ENCODE measurements at regions of chr6 and their contacts with region 1.

Region 1: DNA sequence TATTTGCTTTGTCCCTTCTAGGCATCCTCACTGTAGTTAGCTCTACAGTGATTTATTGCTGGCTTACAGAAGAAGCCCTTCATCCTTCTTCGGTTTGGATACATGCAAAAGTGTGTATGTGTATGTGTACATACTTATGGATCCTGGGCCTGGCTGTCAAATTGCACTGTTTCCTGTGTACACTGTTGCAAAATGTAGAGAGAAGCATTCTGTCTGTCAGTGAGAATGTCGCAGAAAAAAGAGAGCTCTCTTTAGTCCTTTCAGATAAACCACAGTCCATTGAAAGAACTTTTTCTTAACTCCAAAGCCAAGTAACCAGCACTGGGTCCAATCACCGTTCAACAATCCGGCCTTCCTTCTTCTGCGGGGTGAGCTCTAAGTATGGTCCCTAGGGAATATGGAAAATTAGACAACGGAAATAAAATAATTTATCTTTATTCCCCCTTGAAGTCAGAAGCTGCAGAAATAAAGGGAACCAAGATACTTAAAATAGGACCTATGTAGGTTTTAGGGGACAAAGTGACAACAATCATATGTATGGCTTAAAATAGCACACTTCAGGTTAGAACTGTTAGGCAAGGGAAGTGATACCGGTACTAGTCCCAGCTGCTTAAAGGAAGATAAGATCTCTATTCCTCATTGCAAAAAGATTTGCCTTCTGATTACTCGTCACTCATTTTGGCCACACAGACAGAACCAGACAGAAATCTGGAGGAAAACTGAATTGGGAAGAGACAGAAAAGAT is 107.0 kb downstream of the CD83 start:
- DNase-seq: no peak
- H3K4me3 ChIP-seq: no peak overlapping the region
- H3K27ac ChIP-seq: no peak overlapping the region
- H3K4me1 ChIP-seq: no peaks in the 10 kb centered on the region
- H3K27me3 ChIP-seq: no peaks in the 10 kb centered on the region
- CTCF ChIP-seq: no peak

Region 2: GRCh38 chr6:13908955-13909381 is 315.6 kb before region 1 on chr6:
- CTCF ChIA-PET with region 1: no interaction called
- POLR2A ChIA-PET with region 1: no interaction called
- intact Hi-C with region 1: no loop called
- DNase-seq: peak; percentile 54 to 67
- H3K4me3 ChIP-seq: no peak overlapping the region
- H3K27ac ChIP-seq: no peak overlapping the region
- H3K4me1 ChIP-seq: peaks cover 18% of the 10 kb centered on the region
- H3K27me3 ChIP-seq: no peaks in the 10 kb centered on the region
- CTCF ChIP-seq: peak; percentile 92

Region 3: DNA sequence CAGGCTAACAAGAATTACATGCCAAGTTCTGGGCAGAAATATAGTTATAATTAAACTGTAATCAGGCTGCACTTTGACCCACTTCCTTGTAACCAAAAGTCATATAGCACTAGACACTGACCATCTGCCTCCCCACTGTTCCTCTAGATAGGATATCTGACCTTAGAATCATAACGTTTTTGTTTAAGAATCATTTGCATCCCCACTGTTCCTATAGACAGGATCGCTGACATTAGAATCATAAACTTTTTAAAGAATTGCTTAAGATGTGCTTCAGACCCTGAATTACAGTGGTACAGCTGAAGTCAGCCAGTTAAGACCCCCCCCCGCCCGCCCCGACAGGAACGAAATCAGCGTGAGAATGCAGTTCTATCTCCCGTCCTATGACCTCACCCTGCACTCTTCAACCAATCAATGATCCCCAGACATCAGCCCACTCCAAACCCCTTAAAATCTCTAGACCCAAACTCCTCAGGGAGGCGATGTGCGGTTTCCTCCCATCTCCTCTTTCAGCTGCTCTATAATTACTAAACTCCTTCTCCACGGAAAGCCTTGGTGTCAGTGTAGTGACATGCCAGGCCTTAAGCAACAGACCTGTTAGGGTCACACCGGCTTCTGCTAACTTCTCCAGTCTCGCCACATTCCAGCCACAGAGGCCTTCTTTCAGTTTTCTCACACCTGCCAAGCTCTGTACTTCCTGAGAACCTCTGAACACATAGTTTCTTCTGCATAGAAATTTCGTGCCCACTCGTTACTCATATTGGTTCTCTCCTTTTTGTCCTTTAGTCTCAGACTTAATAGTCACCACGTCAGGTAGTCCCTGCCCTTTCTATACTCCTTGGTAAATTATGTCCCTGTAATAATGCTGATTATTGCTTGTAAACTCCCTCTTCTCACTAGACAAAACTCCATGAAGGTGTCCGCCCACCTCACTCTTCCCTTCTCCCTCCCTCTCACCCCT is 1344.8 kb after region 1 on chr6:
- CTCF ChIA-PET with region 1: no interaction called
- POLR2A ChIA-PET with region 1: interaction called, 14 read pairs
- intact Hi-C with region 1: no loop called
- DNase-seq: no peak
- H3K4me3 ChIP-seq: no peak overlapping the region
- H3K27ac ChIP-seq: no peak overlapping the region
- H3K4me1 ChIP-seq: no peaks in the 10 kb centered on the region
- H3K27me3 ChIP-seq: no peaks in the 10 kb centered on the region
- CTCF ChIP-seq: no peak

Measured in PC-9 (cell line).